Dorsolateral prefrontal cortex (tissue), 120 donors: ENCODE measurements at regions of chr11 and their contacts with region 1.

Region 1: GRCh38 chr11:12224537-12224893 is 114.1 kb downstream of the MICAL2 start:
- DNase-seq: peak in 3 of 10 donors; percentile 58 to 90 (median 67)
- H3K4me3 ChIP-seq: no peak overlapping the region
- H3K27ac ChIP-seq: peak overlapping the region in 32 of 59 donors; percentile 4 to 91 (median 38)
- H3K27me3 ChIP-seq: no peaks in the 10 kb centered on the region
- CTCF ChIP-seq: no peak

Region 2: DNA sequence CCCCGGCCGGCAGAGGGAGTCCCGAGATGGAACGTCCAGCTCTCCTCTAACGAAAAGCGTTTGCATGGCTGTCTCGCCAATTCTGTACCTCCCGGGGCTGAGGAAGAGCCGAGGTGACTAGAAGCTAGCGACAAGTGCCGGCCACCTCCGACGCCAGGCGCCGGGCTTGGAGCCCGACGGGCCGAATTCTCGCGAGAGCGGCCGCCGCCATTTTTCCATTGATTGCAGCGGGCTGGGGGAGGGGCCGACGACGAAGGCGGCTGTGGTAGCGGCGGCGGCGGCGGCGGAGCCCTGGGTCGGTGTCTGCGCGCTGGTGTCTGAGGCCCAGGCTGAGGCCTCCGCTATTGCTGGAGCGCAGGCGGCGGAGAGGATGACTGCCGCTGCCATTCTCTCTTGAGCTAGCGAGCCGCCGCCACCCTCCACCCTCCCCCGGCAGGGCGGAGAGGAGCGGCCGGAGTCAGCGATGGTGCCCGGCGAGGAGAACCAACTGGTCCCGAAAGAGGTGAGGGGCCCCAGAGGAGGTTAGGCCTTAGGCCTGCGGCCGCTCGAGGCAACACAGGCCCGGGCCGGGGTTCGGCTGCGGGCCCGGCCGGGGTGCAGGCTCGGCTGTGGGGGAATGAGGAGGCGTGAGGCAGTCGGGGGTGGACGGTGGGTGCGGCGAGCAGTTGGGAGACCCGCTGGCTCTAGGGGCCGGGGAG is 382.6 kb before region 1 on chr11 and contains the start of gene USP47:
- intact Hi-C with region 1: no loop called
- DNase-seq: peak; percentile 73 to 90 (median 86)
- H3K4me3 ChIP-seq: peak within 1 kb of the TSS; percentile 56 to 93 (median 82)
- H3K27ac ChIP-seq: peak within 1 kb of the TSS; percentile 89 to 100 (median 99)
- H3K27me3 ChIP-seq: no peaks in the 10 kb centered on the region
- CTCF ChIP-seq: peak in 54 of 56 donors; percentile 18 to 82 (median 66)
- total RNA-seq, gene USP47: 49.7 to 92.3 (median 69.2) TPM

Region 3: DNA sequence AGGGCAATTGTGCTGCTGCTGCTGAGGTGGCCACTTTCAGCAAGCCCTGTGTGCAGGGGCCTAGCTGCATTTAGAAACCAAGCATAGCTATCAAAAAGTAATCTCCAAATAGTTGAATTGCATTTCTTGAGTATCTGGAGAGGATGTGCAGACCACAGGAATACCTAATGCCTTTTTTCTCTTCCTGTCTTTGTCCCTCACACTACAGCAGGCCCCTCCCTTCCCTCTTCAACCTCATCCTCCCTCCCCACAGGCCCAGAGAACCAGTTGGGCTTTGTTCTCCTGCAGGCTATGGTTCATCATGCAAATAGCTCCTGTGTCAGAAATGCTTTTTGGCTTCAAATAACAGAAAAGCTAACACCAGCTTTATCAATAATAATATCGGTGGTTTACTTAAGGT is 263.8 kb before region 1 on chr11:
- intact Hi-C with region 1: no loop called
- DNase-seq: no peak
- H3K4me3 ChIP-seq: no peak overlapping the region
- H3K27ac ChIP-seq: peak overlapping the region in 43 of 59 donors; percentile 0 to 75 (median 47)
- H3K27me3 ChIP-seq: no peaks in the 10 kb centered on the region
- CTCF ChIP-seq: no peak

Region 4: GRCh38 chr11:12087075-12088004 is 137.2 kb before region 1 on chr11:
- intact Hi-C with region 1: loop called in 1 of 2 experiments (anchors 5 kb)
- DNase-seq: no peak
- H3K4me3 ChIP-seq: no peak overlapping the region
- H3K27ac ChIP-seq: peak overlapping the region in 52 of 59 donors; percentile 8 to 92 (median 67)
- H3K27me3 ChIP-seq: peaks cover 0 to 4% (median 0%) of the 10 kb centered on the region in 45 donors
- CTCF ChIP-seq: no peak